Caco-2 (cell line): ENCODE measurements at regions of chr12 and their contacts with region 1.

Region 1: DNA sequence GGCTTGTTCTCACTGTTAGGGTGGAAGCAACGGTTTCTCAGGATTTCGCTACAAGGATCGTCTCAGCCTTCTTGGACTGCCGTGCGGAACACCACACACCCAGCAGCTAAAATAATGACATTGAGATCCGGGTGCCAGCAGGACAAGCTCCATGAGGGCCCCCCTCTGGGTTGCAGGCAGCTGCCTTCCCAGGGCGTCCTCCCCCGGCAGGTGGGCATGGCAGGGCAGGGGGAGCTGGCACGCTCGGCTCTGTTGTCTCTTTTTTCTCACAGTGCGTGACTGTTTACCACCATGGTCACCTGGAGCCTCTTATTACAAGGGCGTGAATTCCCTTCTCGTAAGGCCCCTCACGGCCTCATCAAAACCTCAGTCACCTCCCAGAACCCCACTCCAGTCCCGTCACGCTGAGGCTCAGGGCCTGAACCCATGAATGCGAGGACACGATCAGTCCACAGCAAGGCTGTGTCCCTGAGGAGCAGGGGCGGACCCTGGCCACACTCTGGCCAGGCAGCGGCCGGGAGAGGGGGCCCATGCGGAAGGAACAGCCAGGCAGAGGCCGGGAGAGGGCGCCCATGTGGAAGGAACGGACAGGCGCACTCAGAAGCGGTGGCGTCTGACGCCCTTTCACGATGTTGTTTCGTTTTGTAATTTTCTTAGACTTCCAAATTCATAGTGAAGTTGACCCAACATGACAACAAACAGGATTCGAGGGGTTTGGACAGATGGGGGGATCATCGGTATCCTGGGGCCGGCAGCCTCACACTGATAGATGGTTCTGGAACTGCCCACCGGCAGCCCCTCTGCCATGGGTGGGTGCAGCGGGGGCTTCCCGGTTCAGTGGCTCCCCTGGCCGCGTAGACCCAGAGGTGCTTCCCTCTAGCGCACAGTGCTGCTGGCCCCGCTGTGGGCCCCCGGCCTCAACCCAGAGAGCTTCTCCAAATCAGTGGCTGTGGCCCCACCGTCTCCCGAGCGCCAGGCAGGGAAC is 10.0 kb downstream of the LRCOL1 start:
- DNase-seq: peak; percentile 76 to 84
- H3K4me3 ChIP-seq: 0 out of 2 replicates have a peak overlapping the region, but pooled peaks have one; percentile 16
- H3K4me3 Mint-ChIP-seq: peak overlapping the region; percentile 60
- H3K27ac Mint-ChIP-seq: no peak overlapping the region
- H3K4me1 ChIP-seq: peaks cover 16% of the 10 kb centered on the region; the same call in 1 of the 2 replicates
- H3K4me1 Mint-ChIP-seq: peaks cover 11% of the 10 kb centered on the region
- H3K27me3 ChIP-seq: no peaks in the 10 kb centered on the region
- H3K27me3 Mint-ChIP-seq: peaks cover 8% of the 10 kb centered on the region
- CTCF ChIP-seq: peak; percentile 60 to 93

Region 2: GRCh38 chr12:132614861-132615578 is 14.7 kb after region 1 on chr12:
- CTCF ChIA-PET with region 1: interaction called, 5 read pairs
- POLR2A ChIA-PET with region 1: interaction called, 3 read pairs
- intact Hi-C with region 1: loop called (anchors 1 kb)
- DNase-seq: peak; percentile 81 to 83
- H3K4me3 ChIP-seq: no peak overlapping the region
- H3K4me3 Mint-ChIP-seq: no peak overlapping the region
- H3K27ac Mint-ChIP-seq: no peak overlapping the region
- H3K4me1 ChIP-seq: no peaks in the 10 kb centered on the region
- H3K4me1 Mint-ChIP-seq: peaks cover 4% of the 10 kb centered on the region
- H3K27me3 ChIP-seq: no peaks in the 10 kb centered on the region
- H3K27me3 Mint-ChIP-seq: peaks cover 2% of the 10 kb centered on the region
- CTCF ChIP-seq: peak; percentile 82 to 89

Region 3: DNA sequence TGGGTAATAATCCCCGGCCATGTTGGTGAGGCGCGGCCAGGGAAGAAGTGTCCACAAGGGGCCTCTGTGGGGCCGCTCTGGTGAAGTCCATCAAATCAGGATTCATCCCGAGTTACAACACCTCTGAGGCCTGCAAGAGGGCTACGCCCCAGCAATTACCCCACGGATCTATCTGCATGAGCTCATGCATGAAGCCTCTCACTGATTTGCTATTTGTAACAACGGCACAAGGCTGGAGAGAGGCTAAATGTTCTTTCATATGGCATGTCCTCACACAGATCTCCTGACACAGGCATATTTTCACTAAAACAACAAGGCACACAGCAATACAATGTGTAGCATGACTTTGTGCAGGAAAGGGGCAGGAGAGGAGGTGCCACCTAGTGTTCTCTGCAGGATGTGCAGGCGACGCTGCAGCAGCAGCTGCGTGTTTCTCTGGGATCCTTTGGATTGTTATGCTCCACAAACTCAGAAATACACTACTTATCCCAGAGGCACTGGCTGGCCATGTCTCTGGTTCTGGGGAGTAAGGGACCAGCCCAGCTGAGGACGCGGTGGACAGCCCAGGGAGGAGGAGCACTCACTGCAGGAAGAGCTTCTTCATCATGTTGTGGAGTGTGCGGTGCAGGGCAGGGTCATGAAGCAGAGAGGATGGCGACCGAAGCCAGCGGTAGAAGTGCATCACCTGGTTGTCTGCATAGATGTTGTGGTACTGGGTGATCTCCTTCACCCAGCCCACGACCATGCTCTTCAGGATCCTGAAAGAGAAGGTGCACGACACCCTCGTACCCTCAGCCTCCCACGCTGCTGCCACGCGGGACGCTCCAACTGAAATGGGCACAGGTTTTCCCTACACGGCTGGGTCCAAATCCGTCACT is 38.4 kb after region 1 on chr12:
- CTCF ChIA-PET with region 1: interaction called, 3 read pairs
- POLR2A ChIA-PET with region 1: no interaction called
- intact Hi-C with region 1: loop called (anchors 1 kb)
- DNase-seq: peak; percentile 55 to 58
- H3K4me3 ChIP-seq: no peak overlapping the region
- H3K4me3 Mint-ChIP-seq: no peak overlapping the region
- H3K27ac Mint-ChIP-seq: no peak overlapping the region
- H3K4me1 ChIP-seq: no peaks in the 10 kb centered on the region
- H3K4me1 Mint-ChIP-seq: no peaks in the 10 kb centered on the region
- H3K27me3 ChIP-seq: no peaks in the 10 kb centered on the region
- H3K27me3 Mint-ChIP-seq: no peaks in the 10 kb centered on the region
- CTCF ChIP-seq: peak; percentile 74